ENCODE measurements at regions of chr22 and their contacts with region 1.

Region 1: GRCh38 chr22:50326959-50327710 is at the start of gene DENND6B:
- DNase-seq: peak; percentile 87
- H3K4me3 ChIP-seq: peak within 1 kb of the TSS; percentile 77
- H3K27ac ChIP-seq: peak within 1 kb of the TSS; percentile 33
- H3K4me1 ChIP-seq: peaks cover 33% of the 10 kb centered on the region
- CTCF ChIP-seq: peak; percentile 54
- total RNA-seq, gene DENND6B: 25.0 and 31.6 TPM in 2 replicates

Region 2: GRCh38 chr22:49992921-49993648 is 334.1 kb before region 1 on chr22:
- CTCF ChIA-PET with region 1: no interaction called
- POLR2A ChIA-PET with region 1: no interaction called
- intact Hi-C with region 1: no loop called
- DNase-seq: peak; percentile 74
- H3K4me3 ChIP-seq: no peak overlapping the region
- H3K27ac ChIP-seq: no peak overlapping the region
- H3K4me1 ChIP-seq: peaks cover 10% of the 10 kb centered on the region
- CTCF ChIP-seq: peak; percentile 80

Region 3: DNA sequence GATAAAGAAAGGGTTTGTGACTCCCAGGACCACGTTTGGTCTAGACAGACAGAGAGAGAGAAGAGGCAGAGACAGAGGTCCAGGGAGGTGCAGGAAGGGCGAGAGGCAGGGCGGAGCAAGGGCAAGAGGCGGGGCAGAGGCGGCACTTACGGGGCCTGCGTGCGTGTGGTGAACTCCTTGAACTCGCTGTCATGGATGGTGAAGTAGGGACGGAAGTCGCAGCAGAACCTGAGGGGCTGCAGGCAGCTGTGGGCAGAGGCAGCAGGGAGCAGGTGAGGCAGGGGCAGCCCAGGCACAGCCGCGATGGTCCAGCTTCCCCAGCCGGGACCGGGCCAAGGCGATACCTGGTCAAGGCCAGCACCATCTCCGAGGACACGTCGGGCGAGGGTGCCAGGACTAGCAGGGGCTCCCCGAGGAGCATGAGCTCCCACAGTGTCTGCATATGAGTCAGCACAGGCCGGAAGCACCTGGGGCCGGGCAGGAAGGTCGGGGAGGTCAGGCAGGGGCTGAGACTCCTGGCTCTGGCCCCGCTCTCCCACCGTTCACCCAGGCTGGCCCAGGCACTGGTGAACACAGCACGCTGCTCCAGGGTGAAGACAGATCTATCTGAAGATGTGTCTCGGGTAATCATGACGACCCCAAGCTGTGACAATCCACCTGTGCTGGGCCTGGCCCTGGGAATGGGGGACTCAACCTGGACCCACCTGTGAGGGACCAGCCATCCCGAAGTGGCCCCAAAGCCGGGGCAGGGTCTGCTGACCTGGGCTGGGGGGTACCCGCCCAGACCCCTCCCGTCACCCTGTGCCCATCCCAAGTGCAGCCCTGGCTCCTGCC is 12.5 kb before region 1 on chr22:
- CTCF ChIA-PET with region 1: interaction called, 3 read pairs
- POLR2A ChIA-PET with region 1: no interaction called
- intact Hi-C with region 1: loop called (anchors 1 kb)
- DNase-seq: peak; percentile 93
- H3K4me3 ChIP-seq: peak overlapping the region; percentile 71
- H3K27ac ChIP-seq: peak overlapping the region; percentile 91
- H3K4me1 ChIP-seq: peaks cover 64% of the 10 kb centered on the region
- CTCF ChIP-seq: no peak

Region 4: GRCh38 chr22:50341977-50342650 is 15.0 kb after region 1 on chr22:
- CTCF ChIA-PET with region 1: no interaction called
- POLR2A ChIA-PET with region 1: interaction called, 3 read pairs
- intact Hi-C with region 1: loop called (anchors 1 kb)
- DNase-seq: peak; percentile 88
- H3K4me3 ChIP-seq: peak overlapping the region; percentile 100
- H3K27ac ChIP-seq: peak overlapping the region; percentile 72
- H3K4me1 ChIP-seq: peaks cover 20% of the 10 kb centered on the region
- CTCF ChIP-seq: peak; percentile 99